ENCODE measurements at regions of chrX and their contacts with region 1.

Region 1: GRCh38 chrX:54044126-54044876 is at the start of gene PHF8:
- DNase-seq: peak; percentile 72 to 94 (median 89)
- H3K4me3 ChIP-seq: peak within 1 kb of the TSS; percentile 38 to 81 (median 69)
- H3K27ac ChIP-seq: peak within 1 kb of the TSS; percentile 71 to 97 (median 92)
- H3K27me3 ChIP-seq: peaks cover 0 to 26% (median 0%) of the 10 kb centered on the region in 45 donors
- CTCF ChIP-seq: peak in 9 of 56 donors; percentile 11 to 33 (median 19)
- total RNA-seq, gene PHF8: 19.1 to 50.0 (median 30.0) TPM

Region 2: GRCh38 chrX:54182864-54183608 is 138.7 kb after region 1 on chrX and contains the start of gene FAM120C:
- intact Hi-C with region 1: loop called (anchors 2 to 5 kb)
- DNase-seq: peak; percentile 32 to 67 (median 50)
- H3K4me3 ChIP-seq: peak within 1 kb of the TSS; percentile 34 to 86 (median 71)
- H3K27ac ChIP-seq: peak within 1 kb of the TSS in 57 of 59 donors; percentile 49 to 94 (median 84)
- H3K27me3 ChIP-seq: peaks cover 0 to 59% (median 13%) of the 10 kb centered on the region in 45 donors
- CTCF ChIP-seq: no peak
- total RNA-seq, gene FAM120C: 18.9 to 33.3 (median 25.4) TPM

Region 3: GRCh38 chrX:54357414-54358377 is 313.4 kb after region 1 on chrX and contains the start of gene WNK3:
- intact Hi-C with region 1: loop called (anchors 5 kb)
- DNase-seq: peak; percentile 48 to 83 (median 72)
- H3K4me3 ChIP-seq: peak within 1 kb of the TSS; percentile 45 to 74 (median 61)
- H3K27ac ChIP-seq: peak within 1 kb of the TSS; percentile 17 to 93 (median 84)
- H3K27me3 ChIP-seq: peaks cover 0 to 31% (median 10%) of the 10 kb centered on the region in 45 donors
- CTCF ChIP-seq: no peak
- total RNA-seq, gene WNK3: 8.0 to 23.1 (median 15.0) TPM

Region 4: DNA sequence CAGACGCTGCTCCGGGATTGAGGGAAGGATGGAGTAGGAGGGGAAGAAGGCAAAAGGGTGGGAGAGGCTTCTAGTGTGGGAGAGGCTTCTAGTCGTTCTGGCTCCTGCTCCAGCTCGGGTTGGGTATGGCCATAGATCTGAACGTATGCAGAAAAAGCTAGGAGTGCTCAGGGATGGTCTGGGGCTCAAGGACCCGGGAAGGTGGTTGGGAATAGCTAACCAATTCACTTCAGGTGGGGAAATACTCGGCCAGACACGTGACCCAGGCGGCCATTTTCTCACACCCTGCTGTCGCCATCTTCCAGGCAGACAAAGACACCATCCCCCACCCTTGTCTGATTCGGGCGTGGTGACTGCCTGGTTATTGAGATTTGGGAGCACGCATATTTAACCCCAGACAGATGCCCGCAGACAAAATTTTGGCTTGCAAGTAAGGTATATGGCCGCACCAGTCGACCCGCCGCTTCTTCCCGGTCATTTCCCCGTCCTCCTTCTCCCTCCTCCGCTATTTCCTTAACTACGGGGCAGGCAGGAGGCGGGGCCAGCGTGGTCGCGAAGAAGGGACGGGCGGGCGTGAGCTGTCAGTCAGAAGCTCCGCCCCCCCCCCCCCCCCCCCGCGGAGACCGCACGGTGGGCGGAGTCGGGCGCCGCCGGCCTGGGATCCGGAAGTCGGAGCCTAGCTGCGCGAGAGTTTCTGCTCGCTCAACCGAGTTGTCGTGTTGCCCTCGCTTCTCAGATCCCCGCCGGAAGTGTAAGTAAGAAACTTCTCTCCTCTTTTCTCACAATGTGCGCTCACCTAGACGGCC is 485.5 kb after region 1 on chrX and contains the start of gene GNL3L:
- intact Hi-C with region 1: loop called in 1 of 2 experiments (anchors 10 kb)
- DNase-seq: peak; percentile 66 to 89 (median 82)
- H3K4me3 ChIP-seq: peak within 1 kb of the TSS; percentile 46 to 86 (median 69)
- H3K27ac ChIP-seq: peak within 1 kb of the TSS; percentile 52 to 96 (median 91)
- H3K27me3 ChIP-seq: peaks cover 0 to 26% (median under 1%) of the 10 kb centered on the region in 45 donors
- CTCF ChIP-seq: peak in 5 of 56 donors; percentile 7 to 17 (median 11)
- total RNA-seq, gene GNL3L: 18.8 to 35.6 (median 27.4) TPM

Region 5: GRCh38 chrX:54639346-54640102 is 595.2 kb after region 1 on chrX:
- intact Hi-C with region 1: loop called in 1 of 2 experiments (anchors 10 kb)
- DNase-seq: peak; percentile 74 to 92 (median 89)
- H3K4me3 ChIP-seq: peak overlapping the region; percentile 21 to 72 (median 54)
- H3K27ac ChIP-seq: peak overlapping the region; percentile 58 to 97 (median 88)
- H3K27me3 ChIP-seq: peaks cover 0 to 36% (median 0%) of the 10 kb centered on the region in 45 donors
- CTCF ChIP-seq: peak in 55 of 56 donors; percentile 38 to 78 (median 64)

Region 6: DNA sequence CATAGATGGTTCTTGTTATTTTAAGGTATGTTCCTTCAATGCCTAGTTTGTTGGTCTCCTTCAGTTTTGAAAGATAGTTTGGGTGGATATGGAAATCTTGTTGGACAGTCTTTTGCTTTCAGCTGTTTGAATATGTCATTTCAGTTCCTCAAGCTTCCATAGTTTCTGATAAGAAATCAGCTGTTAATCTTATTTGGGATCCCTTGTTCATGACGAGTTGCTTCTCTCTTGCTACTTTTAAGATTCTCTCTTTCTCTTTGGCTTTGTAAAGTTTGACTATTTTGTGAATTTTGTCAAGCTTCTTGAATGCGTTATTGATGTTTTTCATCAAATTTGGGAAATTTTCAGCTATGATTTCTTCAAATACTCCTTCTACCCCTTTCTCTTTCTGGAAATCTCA is 615.2 kb after region 1 on chrX:
- intact Hi-C with region 1: no loop called
- DNase-seq: no peak
- H3K4me3 ChIP-seq: no peak overlapping the region
- H3K27ac ChIP-seq: no peak overlapping the region
- H3K27me3 ChIP-seq: peaks cover 0 to 3% (median 0%) of the 10 kb centered on the region in 45 donors
- CTCF ChIP-seq: no peak

Region 7: DNA sequence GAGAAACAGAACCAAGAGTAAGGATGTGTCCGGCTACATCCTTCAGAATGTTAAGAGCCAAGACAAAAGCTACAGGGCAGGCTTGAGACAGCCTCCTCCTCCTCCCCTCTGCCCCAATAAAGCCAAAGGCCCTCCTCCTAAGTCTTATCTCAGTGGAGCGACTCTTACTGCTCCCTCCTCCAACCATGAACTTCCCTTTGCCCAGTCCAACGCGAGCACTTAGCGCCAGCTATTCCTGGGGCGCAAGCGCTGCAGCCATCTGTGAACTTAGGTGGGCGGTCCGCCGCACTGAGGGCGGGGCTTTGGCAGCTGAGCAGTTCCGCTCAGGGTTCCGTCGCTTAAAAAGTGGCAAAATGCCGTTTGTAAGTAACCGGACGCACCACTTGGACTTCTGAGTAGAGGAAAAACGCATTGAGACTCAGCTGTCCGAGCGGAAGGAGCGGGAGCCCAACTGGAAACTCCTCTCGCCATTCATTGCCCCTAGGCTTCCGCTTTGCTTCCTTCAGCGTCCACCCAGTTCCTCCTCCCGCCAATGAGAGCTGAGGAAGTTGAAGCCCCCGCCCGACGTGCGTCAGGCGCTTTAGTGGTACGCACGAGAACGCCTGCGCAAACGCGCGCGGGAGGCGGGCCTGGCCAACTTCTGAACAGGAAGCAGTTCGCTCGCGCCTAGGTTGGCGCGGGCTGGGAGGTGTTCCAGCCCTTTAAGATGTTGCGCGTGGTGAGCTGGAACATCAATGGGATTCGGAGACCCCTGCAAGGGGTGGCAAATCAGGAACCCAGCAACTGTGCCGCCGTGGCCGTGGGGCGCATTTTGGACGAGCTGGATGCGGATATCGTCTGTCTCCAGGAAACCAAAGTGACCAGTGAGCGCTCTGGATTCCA is 955.7 kb after region 1 on chrX and contains the start of gene APEX2:
- intact Hi-C with region 1: loop called in 1 of 2 experiments (anchors 5 kb)
- DNase-seq: peak; percentile 74 to 92 (median 88)
- H3K4me3 ChIP-seq: peak within 1 kb of the TSS; percentile 36 to 80 (median 62)
- H3K27ac ChIP-seq: peak within 1 kb of the TSS; percentile 35 to 93 (median 82)
- H3K27me3 ChIP-seq: peaks cover 0 to 35% (median 1%) of the 10 kb centered on the region in 45 donors
- CTCF ChIP-seq: peak in 4 of 56 donors; percentile 9 to 25 (median 14)
- total RNA-seq, gene APEX2: 4.2 to 12.0 (median 6.3) TPM

Region 8: GRCh38 chrX:55160685-55161552 is 1116.6 kb after region 1 on chrX:
- intact Hi-C with region 1: loop called in 1 of 2 experiments (anchors 10 kb)
- DNase-seq: peak; percentile 75 to 92 (median 88)
- H3K4me3 ChIP-seq: peak overlapping the region; percentile 36 to 75 (median 66)
- H3K27ac ChIP-seq: peak overlapping the region; percentile 29 to 96 (median 90)
- H3K27me3 ChIP-seq: peaks cover 0 to 43% (median 8%) of the 10 kb centered on the region in 45 donors
- CTCF ChIP-seq: peak in 51 of 56 donors; percentile 10 to 69 (median 46)